GM13976 (cell line): ENCODE measurements at regions of chr5 and their contacts with region 1.

Region 1: DNA sequence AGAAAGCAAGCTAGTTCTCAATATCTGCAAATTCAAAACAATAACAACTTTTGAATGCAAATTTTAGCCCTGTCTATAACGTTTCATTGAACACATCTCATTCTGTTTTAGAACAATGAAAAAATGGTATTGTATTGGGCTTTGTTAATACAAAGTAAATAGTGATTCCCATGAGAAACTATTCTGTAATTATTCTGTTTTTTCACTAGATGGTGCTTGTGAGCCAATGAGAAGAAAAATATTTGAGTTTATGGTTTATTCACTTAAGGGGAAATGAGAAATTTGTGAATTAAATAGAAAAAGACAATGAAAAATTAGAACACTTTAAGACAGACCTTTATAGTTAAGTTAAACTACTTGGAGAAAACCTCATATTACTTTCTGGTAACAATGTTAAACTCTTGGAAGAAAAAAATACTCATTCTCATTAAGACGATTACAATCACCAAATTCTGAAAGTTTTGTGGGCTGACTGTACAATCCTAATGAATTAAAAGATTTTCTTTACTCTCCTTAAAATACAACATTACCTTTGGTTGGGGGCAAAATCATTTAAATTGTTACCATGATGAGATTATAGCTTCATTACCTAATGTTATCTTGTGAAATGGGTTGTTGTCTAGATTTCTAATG is 127.0 kb downstream of the NNT start:
- DNase-seq: no peak
- CTCF ChIP-seq: peak; percentile 14

Region 2: DNA sequence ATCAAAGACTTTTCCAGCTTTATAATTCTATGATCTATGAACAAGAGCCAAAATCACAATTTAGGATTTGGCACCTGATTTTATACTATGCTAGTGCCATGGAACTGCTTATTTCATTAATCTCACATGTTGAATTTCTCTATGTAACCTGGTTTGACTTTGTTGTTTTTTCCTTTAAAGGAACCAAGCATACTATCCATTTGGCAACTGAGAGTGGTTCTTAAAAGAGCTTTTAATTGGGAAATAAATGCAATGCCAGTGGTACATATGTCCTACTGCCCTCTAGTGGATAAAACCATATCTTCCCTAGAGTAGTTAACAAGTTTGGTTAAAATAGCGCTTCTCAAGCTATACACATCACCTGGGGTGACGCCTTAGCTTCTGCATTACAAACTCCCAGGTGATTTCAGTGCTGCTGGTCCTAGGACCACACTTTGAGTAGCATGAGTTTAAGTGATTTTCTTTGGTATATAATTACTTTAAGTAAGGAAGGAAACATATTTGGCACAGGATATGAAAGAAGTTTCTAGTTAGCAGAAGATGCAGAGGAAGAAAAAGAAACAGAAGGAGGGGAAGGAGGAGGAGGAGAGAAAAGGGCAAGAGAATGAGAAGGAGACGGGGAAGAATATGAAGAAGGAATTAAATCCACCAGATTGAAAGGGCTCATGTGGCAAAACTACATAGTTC is 602.5 kb after region 1 on chr5:
- in situ Hi-C with region 1: loop called (anchors 25 kb)
- DNase-seq: peak; percentile 6
- CTCF ChIP-seq: peak; percentile 35